ENCODE measurements at regions of chr5 and their contacts with region 1.

Region 1: GRCh38 chr5:82641331-82642003 is 363.3 kb upstream of the RPS23 start:
- DNase-seq: peak in 7 of 10 donors; percentile 22 to 73 (median 47)
- H3K4me3 ChIP-seq: peak overlapping the region in 16 of 59 donors; percentile 2 to 38 (median 22)
- H3K27ac ChIP-seq: peak overlapping the region in 43 of 59 donors; percentile 16 to 77 (median 58)
- H3K27me3 ChIP-seq: no peaks in the 10 kb centered on the region
- CTCF ChIP-seq: peak; percentile 60 to 93 (median 77)

Region 2: DNA sequence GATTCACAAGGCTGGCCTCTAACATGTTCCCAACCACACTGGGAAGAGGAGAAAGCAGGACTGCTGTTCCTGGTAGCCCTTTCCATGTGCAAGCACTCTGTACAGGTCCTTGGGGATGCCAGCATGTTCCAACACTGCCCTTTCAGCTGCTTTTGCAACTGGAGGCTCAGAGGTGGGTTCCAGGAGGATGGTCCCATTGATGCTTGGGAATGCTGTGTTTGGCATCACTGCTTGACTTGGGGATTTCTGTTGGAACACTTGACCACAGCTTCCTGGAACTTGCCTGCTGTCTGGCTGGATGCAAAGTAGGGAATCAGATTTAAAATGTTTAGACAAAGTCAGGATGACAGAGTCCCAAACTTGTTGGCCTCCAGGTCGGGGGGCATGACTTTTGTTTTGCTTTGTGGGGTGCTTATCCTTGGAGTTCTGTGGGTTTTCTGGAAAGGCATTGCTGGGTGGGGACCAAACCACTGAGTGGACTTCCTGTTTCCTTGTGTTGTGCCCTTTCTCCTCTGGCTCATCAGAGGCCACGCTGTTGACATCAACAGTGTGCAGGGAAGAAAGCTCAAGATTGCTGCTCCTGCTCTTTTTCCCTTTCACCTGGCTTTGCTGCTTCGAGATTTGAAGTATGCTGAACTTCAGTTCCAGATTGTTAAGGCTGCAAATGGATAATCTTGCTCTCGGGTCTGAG is 214.9 kb before region 1 on chr5:
- intact Hi-C with region 1: no loop called
- DNase-seq: no peak
- H3K4me3 ChIP-seq: no peak overlapping the region
- H3K27ac ChIP-seq: no peak overlapping the region
- H3K27me3 ChIP-seq: no peaks in the 10 kb centered on the region
- CTCF ChIP-seq: no peak

Region 3: GRCh38 chr5:82793808-82794419 is 152.4 kb after region 1 on chr5:
- intact Hi-C with region 1: loop called (anchors 5 to 10 kb)
- DNase-seq: peak in 1 of 10 donors; percentile 22
- H3K4me3 ChIP-seq: no peak overlapping the region
- H3K27ac ChIP-seq: no peak overlapping the region
- H3K27me3 ChIP-seq: no peaks in the 10 kb centered on the region
- CTCF ChIP-seq: peak in 55 of 56 donors; percentile 39 to 81 (median 68)

Region 4: DNA sequence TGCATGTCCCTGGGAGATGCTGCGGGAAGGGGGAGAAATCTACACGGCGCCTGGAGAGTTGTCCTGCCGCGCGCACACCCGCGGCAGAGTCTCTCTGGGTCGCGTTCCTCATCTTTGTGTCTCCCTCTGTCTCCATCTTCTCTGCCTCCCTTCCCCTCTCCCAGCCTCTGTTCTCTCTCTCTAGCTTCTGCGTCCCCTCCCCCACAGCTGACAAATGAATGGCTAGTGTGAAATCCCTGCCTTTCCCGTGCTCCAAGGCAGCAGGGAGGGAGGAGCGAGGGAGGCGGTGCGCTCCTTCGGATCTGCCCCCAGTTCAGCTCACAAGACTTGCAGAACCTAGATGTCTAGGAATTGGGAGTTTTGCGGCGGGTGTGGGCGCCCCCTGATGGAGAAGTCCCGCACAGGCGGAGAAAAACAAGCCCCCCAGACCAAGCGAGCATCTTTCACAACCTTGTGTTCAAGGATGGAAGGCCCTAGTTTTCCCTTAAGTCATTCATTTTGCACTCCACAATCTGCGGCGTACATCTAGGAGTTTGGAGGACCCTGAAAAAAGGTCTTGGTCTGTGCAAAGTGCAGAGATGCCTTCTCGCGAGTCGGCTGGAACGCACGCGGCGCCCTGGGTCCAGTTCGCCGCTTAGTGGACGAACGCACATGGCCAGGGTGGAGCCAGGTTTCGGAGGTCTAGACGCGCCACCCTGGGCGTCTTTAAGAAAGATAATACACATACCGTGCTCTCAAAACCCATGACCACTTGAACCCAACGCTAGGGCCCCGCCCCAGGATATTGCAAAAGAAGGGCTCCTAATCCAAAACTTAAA is 832.1 kb after region 1 on chr5:
- intact Hi-C with region 1: loop called (anchors 2 to 5 kb)
- DNase-seq: peak; percentile 38 to 86 (median 80)
- H3K4me3 ChIP-seq: peak overlapping the region; percentile 37 to 75 (median 59)
- H3K27ac ChIP-seq: peak overlapping the region in 28 of 59 donors; percentile 8 to 75 (median 50)
- H3K27me3 ChIP-seq: peaks cover 0 to 89% (median 41%) of the 10 kb centered on the region in 45 donors
- CTCF ChIP-seq: peak; percentile 53 to 91 (median 82)

Measured in dorsolateral prefrontal cortex (tissue), 120 donors.